PC-9 (cell line): ENCODE measurements at regions of chr16 and their contacts with region 1.

Region 1: DNA sequence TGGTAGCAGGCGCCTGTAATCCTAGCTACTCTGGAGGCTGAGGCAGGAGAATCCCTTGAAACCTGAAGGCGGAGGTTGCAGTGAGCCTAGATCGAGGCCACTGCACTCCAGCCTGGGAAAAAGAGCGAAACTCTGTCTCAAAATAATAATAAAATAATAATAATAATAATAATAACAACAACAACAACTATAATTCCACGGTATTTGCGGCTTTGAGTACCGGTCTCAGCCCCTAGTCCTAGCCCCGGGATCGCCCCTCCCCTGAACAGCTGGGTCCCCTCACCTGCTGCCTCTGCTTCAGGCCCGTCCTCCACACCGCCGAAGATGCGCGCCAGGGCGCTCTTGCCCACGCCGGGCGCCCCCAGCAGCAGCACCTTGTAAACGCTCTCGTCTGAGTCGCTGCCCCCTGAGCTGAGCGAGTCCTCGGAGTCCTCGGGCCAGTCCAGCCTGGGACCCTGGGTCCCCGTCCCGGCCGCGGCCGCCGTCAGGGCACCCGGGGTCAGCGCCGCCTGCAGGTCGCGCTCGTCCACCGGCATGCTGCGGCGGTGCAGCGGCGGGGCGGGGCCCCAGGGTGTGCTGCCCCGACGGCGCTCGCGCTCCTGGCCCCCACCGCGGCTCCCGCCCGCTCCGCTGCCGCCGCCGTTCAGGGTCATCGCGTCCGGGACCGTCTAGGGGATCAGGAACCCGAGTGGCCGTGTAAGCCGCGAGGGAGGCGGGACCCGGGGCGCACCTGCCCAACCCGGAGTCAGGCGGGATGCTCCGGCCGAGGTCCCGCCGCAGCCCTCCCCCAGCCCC is 611 bp downstream of the RRAD start:
- DNase-seq: peak in 1 of 2 experiments; percentile 34
- H3K4me3 ChIP-seq: no peak overlapping the region
- H3K27ac ChIP-seq: no peak overlapping the region
- H3K4me1 ChIP-seq: peaks cover 41% of the 10 kb centered on the region
- H3K27me3 ChIP-seq: no peaks in the 10 kb centered on the region
- CTCF ChIP-seq: no peak

Region 2: DNA sequence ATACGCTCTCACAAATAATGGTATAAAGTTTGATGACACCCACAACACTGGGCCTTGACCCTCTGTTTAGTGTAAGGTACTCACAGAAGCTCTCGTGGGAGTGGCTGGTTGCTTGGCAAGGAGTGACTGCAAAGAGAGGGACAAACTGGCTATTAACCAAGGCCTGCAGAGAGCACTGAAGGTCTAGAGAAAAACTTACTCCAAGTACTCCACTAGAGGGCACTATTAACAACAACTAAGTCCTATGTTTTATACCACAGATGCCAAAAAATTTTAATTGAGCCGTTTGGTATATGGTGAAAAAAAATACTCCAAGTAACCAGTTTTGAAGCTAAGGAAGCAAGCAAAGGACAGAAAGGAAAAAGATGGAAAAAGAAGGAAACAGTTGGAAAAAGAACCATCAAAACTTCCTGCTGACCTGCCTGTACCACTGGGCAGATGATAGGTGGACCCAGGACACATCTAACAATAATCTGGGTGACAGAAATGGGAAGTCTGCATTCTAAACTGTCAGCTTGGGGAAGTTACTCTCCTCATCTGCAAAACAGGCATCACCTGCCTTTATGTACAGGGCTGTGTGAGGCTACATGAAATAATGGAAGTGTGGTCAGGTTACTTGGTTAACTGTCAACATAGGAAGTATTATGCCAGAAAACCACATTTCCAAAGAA is 196.5 kb before region 1 on chr16:
- CTCF ChIA-PET with region 1: no interaction called
- POLR2A ChIA-PET with region 1: no interaction called
- intact Hi-C with region 1: no loop called
- DNase-seq: peak in 1 of 2 experiments; percentile 48
- H3K4me3 ChIP-seq: no peak overlapping the region
- H3K27ac ChIP-seq: no peak overlapping the region
- H3K4me1 ChIP-seq: no peaks in the 10 kb centered on the region
- H3K27me3 ChIP-seq: no peaks in the 10 kb centered on the region
- CTCF ChIP-seq: peak; percentile 82

Region 3: DNA sequence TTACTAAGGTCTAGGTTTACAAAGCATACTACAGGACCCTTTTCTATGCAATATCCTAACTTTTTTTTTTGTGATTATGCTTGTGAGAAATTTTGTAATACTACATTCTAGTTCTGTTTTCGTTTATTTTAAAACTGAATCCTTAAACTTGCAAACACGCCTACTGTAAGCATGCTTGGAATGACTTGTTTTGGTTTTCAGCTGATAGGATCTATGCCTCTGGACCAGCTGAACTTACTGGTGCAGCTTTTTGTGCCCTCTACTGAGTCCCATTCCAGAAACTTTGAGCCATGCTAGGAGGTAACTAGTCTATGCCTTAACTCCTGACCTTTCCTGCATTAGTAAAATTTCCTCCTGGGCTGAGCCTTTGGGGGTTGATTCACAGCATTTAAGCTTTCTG is 38.4 kb before region 1 on chr16:
- CTCF ChIA-PET with region 1: interaction called, 12 read pairs
- POLR2A ChIA-PET with region 1: no interaction called
- intact Hi-C with region 1: loop called (anchors 5 kb)
- DNase-seq: peak in 1 of 2 experiments; percentile 52
- H3K4me3 ChIP-seq: peak overlapping the region; percentile 11; the same call in 1 of the 2 replicates
- H3K27ac ChIP-seq: peak overlapping the region; percentile 51; the same call in 1 of the 2 replicates
- H3K4me1 ChIP-seq: peaks cover 20% of the 10 kb centered on the region
- H3K27me3 ChIP-seq: no peaks in the 10 kb centered on the region
- CTCF ChIP-seq: no peak

Region 4: GRCh38 chr16:66899945-66900710 is 24.6 kb before region 1 on chr16:
- CTCF ChIA-PET with region 1: interaction called, 14 read pairs
- POLR2A ChIA-PET with region 1: interaction called, 3 read pairs
- intact Hi-C with region 1: loop called (anchors 1 kb)
- DNase-seq: peak; percentile 66 to 75
- H3K4me3 ChIP-seq: no peak overlapping the region
- H3K27ac ChIP-seq: peak overlapping the region; percentile 50
- H3K4me1 ChIP-seq: peaks cover 35% of the 10 kb centered on the region
- H3K27me3 ChIP-seq: no peaks in the 10 kb centered on the region
- CTCF ChIP-seq: no peak

Region 5: DNA sequence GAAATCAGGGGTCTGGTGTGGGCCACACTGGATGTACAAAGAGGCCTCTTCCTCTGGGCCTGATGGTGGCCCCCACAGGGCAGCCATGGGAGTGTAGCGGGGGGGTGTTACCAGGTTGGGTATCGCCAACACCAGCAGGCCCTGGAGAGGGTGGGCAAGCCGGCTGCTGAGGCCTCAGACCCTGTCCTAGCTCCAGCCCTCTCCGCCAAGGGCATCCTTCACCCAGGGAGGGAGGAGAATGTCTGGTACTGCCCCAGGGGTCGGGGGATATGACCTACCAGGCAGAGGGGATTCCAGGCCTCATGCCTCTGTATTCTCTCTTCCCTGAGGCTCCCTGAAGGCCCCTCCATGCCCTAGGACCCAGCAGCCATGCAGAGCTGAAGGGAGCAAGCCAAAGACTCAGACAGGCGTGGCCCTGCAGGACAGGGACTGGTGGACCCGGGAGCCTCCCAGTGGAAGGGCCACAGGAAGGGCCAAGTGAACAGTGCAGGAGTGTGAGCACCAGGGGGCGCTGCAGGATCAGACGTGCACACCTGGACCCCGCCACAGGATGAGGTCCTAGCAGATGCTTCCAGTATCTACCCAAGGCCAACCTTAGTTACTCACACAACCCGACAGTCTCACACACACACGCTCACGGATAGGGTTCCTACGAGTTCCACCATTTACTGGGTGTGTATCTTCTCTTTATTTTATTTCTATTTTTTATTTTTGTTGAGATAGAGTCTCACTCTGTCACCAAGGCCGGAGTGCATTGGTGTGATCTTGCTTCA is 52.8 kb after region 1 on chr16:
- CTCF ChIA-PET with region 1: no interaction called
- POLR2A ChIA-PET with region 1: no interaction called
- intact Hi-C with region 1: no loop called
- DNase-seq: peak; percentile 62 to 82
- H3K4me3 ChIP-seq: no peak overlapping the region
- H3K27ac ChIP-seq: no peak overlapping the region
- H3K4me1 ChIP-seq: no peaks in the 10 kb centered on the region
- H3K27me3 ChIP-seq: no peaks in the 10 kb centered on the region
- CTCF ChIP-seq: peak; percentile 96

Region 6: GRCh38 chr16:67415872-67416793 is 491.4 kb after region 1 on chr16 and contains the start of gene ZDHHC1:
- CTCF ChIA-PET with region 1: no interaction called
- POLR2A ChIA-PET with region 1: interaction called, 11 read pairs
- intact Hi-C with region 1: no loop called
- DNase-seq: peak in 1 of 2 experiments; percentile 72
- H3K4me3 ChIP-seq: peak within 1 kb of the TSS; percentile 62
- H3K27ac ChIP-seq: no peak within 1 kb of the TSS
- H3K4me1 ChIP-seq: peaks cover 8% of the 10 kb centered on the region
- H3K27me3 ChIP-seq: no peaks in the 10 kb centered on the region
- CTCF ChIP-seq: peak; percentile 76
- total RNA-seq, gene ZDHHC1: 12.8 and 14.9 TPM in 2 replicates